ENCODE measurements at regions of chr15 and their contacts with region 1.

Region 1: GRCh38 chr15:45573961-45574629 is 13.1 kb upstream of the BLOC1S6 start:
- DNase-seq: peak; percentile 63 to 94
- H3K4me3 ChIP-seq: peak overlapping the region in 2 of 4 experiments; percentile 14 to 35; a peak in 2 of 8 replicates
- H3K27ac ChIP-seq: no peak overlapping the region
- H3K4me1 ChIP-seq: peaks cover 0 to 2% (median 1%) of the 10 kb centered on the region in 4 experiments; a peak in 5 of 7 replicates
- H3K27me3 ChIP-seq: peaks cover 0 to 5% (median under 1%) of the 10 kb centered on the region in 4 experiments; a peak in 1 of 7 replicates
- CTCF ChIP-seq: peak; percentile 64 to 87 (median 81)
- EP300 ChIP-seq: no peak
- POLR2A ChIP-seq: no peak
- RAD21 ChIP-seq: peak; percentile 64 to 70

Region 2: DNA sequence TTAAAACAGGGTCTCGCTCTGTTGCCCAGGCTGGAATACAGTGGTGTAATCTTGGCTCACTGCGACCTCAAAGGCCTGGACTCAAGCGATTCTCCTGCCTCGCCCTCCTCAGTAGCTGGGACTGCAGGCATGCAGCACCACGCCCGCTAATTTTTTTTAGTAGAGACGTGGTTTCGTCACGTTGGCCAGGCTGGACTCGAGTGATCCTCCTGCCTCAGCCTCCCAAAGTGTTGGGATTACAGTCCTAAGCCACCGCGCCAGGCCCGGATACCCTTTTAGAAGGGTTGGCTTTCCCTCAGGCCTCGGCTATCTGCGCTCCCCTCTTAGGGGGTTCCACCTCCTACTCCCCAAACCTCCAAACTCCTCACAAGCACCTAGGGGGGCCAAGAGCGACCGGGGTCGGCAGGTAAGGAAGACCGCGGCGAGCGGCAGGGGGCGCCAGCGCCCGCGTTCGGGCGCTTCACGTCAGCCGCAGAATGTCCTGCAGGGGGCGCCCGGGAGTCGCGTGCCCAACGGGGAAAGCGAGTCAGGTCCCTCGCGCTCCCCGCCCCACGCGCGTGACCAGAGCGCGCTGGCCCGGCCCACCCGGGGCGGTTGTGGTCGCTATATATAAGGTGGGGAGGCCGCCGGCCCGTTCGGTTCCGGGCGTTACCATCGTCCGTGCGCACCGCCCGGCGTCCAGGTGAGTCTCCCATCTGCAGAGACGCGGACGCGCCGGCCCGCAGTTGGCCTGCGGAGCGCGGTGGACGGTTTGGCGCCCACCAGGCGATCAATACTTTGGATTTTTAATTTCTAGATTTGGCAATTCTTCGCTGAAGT is 143.9 kb before region 1 on chr15:
- CTCF ChIA-PET with region 1: interaction called, 10 read pairs
- POLR2A ChIA-PET with region 1: no interaction called
- DNase-seq: peak; percentile 21 to 98
- H3K4me3 ChIP-seq: peak overlapping the region; percentile 21 to 63 (median 42)
- H3K27ac ChIP-seq: no peak overlapping the region
- H3K4me1 ChIP-seq: no peaks in the 10 kb centered on the region
- H3K27me3 ChIP-seq: peaks cover 3 to 22% (median 13%) of the 10 kb centered on the region in 4 experiments; a peak in 6 of 7 replicates
- CTCF ChIP-seq: peak; percentile 93 to 100 (median 93)
- EP300 ChIP-seq: no peak
- POLR2A ChIP-seq: no peak
- RAD21 ChIP-seq: peak; percentile 84 to 89

Region 3: GRCh38 chr15:45535486-45536042 is 38.5 kb before region 1 on chr15:
- CTCF ChIA-PET with region 1: interaction called, 11 read pairs
- POLR2A ChIA-PET with region 1: no interaction called
- DNase-seq: no peak
- H3K4me3 ChIP-seq: no peak overlapping the region
- H3K27ac ChIP-seq: no peak overlapping the region
- H3K4me1 ChIP-seq: peaks cover 0 to 3% (median 1%) of the 10 kb centered on the region in 4 experiments; a peak in 2 of 7 replicates
- H3K27me3 ChIP-seq: no peaks in the 10 kb centered on the region
- CTCF ChIP-seq: no peak
- EP300 ChIP-seq: no peak
- POLR2A ChIP-seq: no peak
- RAD21 ChIP-seq: no peak

Region 4: DNA sequence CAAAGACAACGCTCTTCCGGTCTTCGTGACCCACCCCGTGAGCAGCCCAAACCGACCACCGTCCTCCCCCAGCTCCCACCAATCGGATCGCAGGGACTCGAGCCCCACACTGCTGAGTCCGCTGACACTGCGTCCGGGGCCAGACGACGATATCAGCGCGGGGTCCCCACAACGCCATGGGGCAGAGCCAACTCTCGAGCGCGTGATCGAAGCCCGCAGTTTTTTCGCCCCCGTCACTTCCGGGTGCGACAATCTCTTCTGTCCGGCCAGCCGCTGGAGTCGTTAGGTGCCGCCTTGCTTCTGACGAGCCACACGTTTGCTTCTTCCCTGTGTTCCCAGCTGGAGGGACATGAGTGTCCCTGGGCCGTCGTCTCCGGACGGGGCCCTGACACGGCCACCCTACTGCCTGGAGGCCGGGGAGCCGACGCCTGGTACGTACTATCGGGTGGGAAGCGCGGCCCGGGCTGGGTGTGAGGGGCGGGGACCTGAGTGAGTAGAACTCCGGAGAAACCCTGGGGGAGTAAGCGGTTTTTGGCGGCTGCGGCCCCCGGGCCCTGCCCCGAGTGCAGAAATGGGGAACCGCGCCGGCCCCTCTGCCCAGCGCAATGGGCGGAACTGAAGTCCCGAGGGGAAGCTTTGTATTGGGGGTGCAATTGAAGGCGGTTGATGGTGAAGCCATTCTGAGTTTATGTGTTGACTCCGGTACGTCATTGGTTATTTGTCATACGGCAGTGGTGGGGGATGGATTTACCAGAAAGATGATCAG is 13.2 kb after region 1 on chr15 and contains the start of gene BLOC1S6:
- CTCF ChIA-PET with region 1: interaction called, 33 read pairs
- POLR2A ChIA-PET with region 1: interaction called, 31 read pairs
- DNase-seq: peak; percentile 84 to 94
- H3K4me3 ChIP-seq: peak within 1 kb of the TSS; percentile 79 to 87 (median 83)
- H3K27ac ChIP-seq: peak within 1 kb of the TSS; percentile 98
- H3K4me1 ChIP-seq: peaks cover 3 to 12% (median 7%) of the 10 kb centered on the region in 4 experiments; a peak in 4 of 7 replicates
- H3K27me3 ChIP-seq: no peaks in the 10 kb centered on the region
- CTCF ChIP-seq: no peak
- EP300 ChIP-seq: peak in 1 of 2 experiments; percentile 59; a peak in 1 of 3 replicates
- POLR2A ChIP-seq: peak; percentile 59 to 97
- RAD21 ChIP-seq: no peak
- total RNA-seq, gene BLOC1S6: 28.7 and 28.8 TPM in 2 replicates

Region 5: GRCh38 chr15:45611305-45611704 is 37.2 kb after region 1 on chr15:
- CTCF ChIA-PET with region 1: interaction called, 17 read pairs
- POLR2A ChIA-PET with region 1: interaction called, 3 read pairs
- DNase-seq: no peak
- H3K4me3 ChIP-seq: no peak overlapping the region
- H3K27ac ChIP-seq: no peak overlapping the region
- H3K4me1 ChIP-seq: no peaks in the 10 kb centered on the region
- H3K27me3 ChIP-seq: no peaks in the 10 kb centered on the region
- CTCF ChIP-seq: peak in 1 of 3 experiments; percentile 38; a peak in 2 of 4 replicates
- EP300 ChIP-seq: no peak
- POLR2A ChIP-seq: no peak
- RAD21 ChIP-seq: peak; percentile 29 to 34; a peak in 2 of 4 replicates

Region 6: GRCh38 chr15:45634442-45635190 is 60.5 kb after region 1 on chr15 and contains the start of gene SQOR:
- CTCF ChIA-PET with region 1: no interaction called
- POLR2A ChIA-PET with region 1: no interaction called
- DNase-seq: peak in 1 of 2 experiments; percentile 74
- H3K4me3 ChIP-seq: peak within 1 kb of the TSS; percentile 52 to 75 (median 70)
- H3K27ac ChIP-seq: no peak within 1 kb of the TSS
- H3K4me1 ChIP-seq: peaks cover 0 to 7% (median 1%) of the 10 kb centered on the region in 4 experiments; a peak in 3 of 7 replicates
- H3K27me3 ChIP-seq: peaks cover 0 to 25% (median 19%) of the 10 kb centered on the region in 4 experiments; a peak in 6 of 7 replicates
- CTCF ChIP-seq: no peak
- EP300 ChIP-seq: no peak
- POLR2A ChIP-seq: no peak
- RAD21 ChIP-seq: no peak
- total RNA-seq, gene SQOR: 0.22 and 0.25 TPM in 2 replicates

Region 7: GRCh38 chr15:45670091-45670490 is 96.0 kb after region 1 on chr15:
- CTCF ChIA-PET with region 1: no interaction called
- POLR2A ChIA-PET with region 1: no interaction called
- DNase-seq: no peak
- H3K4me3 ChIP-seq: no peak overlapping the region
- H3K27ac ChIP-seq: no peak overlapping the region
- H3K4me1 ChIP-seq: no peaks in the 10 kb centered on the region
- H3K27me3 ChIP-seq: no peaks in the 10 kb centered on the region
- CTCF ChIP-seq: no peak
- EP300 ChIP-seq: no peak
- POLR2A ChIP-seq: no peak
- RAD21 ChIP-seq: no peak

Measured in H1 (cell line).